Endothelial cell of umbilical vein (primary cell): ENCODE measurements at regions of chr3 and their contacts with region 1.

Region 1: DNA sequence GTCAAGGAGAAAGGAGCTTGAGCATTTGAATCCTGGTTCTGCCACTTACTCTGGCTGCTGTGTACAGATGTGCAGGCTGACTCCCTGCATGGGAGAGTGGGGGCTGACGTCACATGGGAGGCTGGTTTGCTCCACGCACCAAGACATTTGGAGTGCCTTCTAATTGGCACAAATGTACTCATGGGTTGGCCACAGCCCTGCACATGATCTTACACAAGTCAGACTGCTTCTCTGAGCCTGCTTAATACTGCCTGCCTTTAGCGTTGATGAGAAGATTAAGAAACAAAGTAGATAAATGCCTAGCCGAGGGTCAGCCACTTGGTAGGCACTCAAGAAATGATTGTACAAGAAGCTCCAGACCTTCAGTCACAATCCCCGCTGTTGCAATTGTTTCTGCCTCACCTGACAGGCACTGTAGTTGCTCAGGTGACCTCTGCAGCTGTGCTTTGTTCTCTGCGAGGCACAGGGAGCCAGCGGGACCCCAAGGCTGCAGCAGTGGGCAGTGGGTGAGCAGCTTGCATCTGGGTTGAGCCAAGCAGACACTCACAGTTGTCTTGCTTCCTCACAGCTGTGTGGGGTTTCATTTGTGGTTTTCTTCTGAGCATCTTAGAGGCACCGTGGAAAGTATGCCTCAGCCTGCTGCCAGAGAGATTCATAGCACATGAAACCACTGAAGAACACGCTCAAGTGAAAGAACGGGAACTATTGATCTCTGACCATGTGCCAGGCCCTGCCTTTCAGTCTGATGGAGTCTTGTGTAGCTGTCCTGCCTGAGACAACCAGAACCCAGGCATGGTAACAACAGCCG is 33.1 kb downstream of the GRK7 start:
- DNase-seq: peak; percentile 6
- H3K4me3 ChIP-seq: no peak overlapping the region
- H3K27ac ChIP-seq: no peak overlapping the region
- H3K4me1 ChIP-seq: peaks cover 16% of the 10 kb centered on the region
- H3K27me3 ChIP-seq: no peaks in the 10 kb centered on the region
- CTCF ChIP-seq: no peak
- POLR2A ChIP-seq: no peak

Region 2: DNA sequence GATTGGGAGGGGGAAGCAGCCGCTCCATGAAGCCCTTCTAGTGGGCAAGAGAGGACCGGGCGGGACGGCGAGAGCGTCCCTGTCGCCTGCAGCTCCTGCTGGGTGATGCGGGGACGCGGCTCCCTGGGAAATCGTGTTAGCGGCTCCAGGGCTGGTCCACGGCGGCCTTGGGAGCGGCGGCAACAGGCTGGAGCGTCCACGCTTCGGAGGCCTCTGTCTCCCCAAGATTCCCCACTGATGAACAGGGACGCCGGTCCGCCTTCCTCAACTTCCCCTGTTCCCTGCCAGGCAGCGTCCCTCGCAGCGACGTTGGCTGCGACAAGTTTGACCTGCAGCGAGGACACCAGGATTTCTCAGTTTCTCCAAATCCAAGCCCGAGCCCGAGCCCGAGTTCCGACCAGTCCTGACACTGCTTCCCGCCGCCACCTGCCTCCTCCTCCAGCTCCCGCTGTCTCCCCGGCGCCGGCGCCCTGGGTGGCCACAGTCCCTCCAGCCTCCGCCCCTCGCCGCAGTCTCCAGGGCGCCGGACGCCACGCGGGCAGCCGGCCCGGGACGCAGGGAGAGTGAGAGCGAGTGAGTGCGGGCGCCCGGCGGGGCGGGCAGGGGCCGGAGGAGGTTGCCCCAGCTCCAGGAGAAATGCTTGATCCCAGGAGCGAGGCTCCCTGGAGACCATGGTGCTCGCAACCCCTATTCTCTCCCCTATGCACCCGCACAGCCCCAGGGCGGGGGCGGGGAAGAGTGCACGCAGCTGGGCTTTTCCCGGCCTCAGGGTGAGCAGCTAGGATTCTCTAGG is 136.3 kb before region 1 on chr3:
- CTCF ChIA-PET with region 1: no interaction called
- POLR2A ChIA-PET with region 1: no interaction called
- dilution Hi-C with region 1: no loop called
- intact Hi-C with region 1: no loop called
- DNase-seq: peak; percentile 31
- H3K4me3 ChIP-seq: peak overlapping the region; percentile 1 to 35 (median 7)
- H3K27ac ChIP-seq: no peak overlapping the region
- H3K4me1 ChIP-seq: no peaks in the 10 kb centered on the region
- H3K27me3 ChIP-seq: peaks cover 40 to 50% of the 10 kb centered on the region in 2 experiments
- CTCF ChIP-seq: no peak
- POLR2A ChIP-seq: no peak

Region 3: DNA sequence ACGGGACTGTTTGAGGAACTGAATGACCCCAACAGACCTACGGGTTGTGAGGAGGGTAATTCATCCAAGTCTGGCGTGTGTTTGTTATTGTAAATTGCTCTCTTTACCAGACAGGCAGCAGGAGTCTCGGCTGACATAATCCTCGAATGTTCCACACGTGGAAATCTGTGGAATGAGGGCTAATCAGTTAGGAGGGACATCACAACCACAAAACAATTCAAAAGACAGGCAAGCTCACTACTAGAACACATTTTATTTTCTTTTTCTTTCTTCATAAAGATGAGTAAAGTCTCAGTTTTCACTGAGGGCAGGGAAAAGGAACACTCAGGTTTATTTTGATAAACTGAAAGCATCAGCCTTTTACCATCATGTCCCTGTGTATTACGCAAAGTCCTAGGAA is 20.7 kb after region 1 on chr3:
- CTCF ChIA-PET with region 1: no interaction called
- POLR2A ChIA-PET with region 1: no interaction called
- dilution Hi-C with region 1: no loop called
- intact Hi-C with region 1: no loop called
- DNase-seq: no peak
- H3K4me3 ChIP-seq: no peak overlapping the region
- H3K27ac ChIP-seq: no peak overlapping the region
- H3K4me1 ChIP-seq: no peaks in the 10 kb centered on the region
- H3K27me3 ChIP-seq: peaks cover 16 to 27% of the 10 kb centered on the region in 2 experiments
- CTCF ChIP-seq: no peak
- POLR2A ChIP-seq: no peak

Region 4: DNA sequence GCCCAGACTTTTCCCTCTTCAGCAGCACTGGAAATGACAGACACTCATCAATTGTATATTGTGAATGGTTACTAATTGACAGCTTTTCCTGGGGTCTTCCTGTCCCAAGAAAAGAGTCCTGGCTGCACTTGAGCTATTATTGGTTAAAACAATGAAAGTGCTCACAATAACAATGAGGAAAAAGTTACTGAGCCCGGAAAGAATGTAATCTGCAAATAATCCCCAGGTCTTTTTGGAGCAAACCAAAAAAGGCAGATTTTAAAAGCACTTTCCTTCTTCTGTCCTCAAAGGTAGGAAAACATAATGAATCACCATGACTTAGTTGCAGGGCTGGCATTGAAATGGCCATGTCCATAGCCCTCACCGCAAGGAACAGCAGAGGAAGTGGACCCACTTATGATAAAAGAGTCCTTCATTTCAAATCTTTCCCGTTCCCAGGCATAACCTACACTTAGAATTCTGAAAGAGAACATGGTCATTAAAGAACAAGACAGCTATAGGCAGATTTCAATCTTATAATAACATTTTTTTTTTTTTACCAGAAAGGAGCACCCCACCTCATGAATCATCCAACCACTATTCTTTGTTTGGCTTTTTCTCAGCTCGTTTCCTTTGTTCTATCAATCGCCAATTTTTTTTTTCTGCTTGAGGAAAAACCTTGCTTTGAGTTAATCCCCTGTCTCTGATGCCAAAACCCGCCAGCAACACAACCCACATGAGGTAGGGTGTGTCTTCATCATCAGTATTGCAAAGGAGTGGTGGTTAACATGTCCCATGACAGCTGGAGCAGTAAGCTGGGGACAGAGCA is 44.7 kb after region 1 on chr3:
- CTCF ChIA-PET with region 1: interaction called, 8 read pairs
- POLR2A ChIA-PET with region 1: interaction called, 4 read pairs
- dilution Hi-C with region 1: no loop called
- intact Hi-C with region 1: loop called (anchors 2 kb)
- DNase-seq: peak; percentile 84
- H3K4me3 ChIP-seq: peak overlapping the region in 1 of 3 experiments; percentile 9
- H3K27ac ChIP-seq: peak overlapping the region; percentile 80
- H3K4me1 ChIP-seq: peaks cover 21% of the 10 kb centered on the region
- H3K27me3 ChIP-seq: no peaks in the 10 kb centered on the region
- CTCF ChIP-seq: no peak
- POLR2A ChIP-seq: no peak

Region 5: GRCh38 chr3:141851411-141851810 is 55.1 kb after region 1 on chr3:
- CTCF ChIA-PET with region 1: no interaction called
- POLR2A ChIA-PET with region 1: no interaction called
- dilution Hi-C with region 1: no loop called
- intact Hi-C with region 1: loop called (anchors 2 kb)
- DNase-seq: peak; percentile 87
- H3K4me3 ChIP-seq: no peak overlapping the region
- H3K27ac ChIP-seq: no peak overlapping the region
- H3K4me1 ChIP-seq: peaks cover 9% of the 10 kb centered on the region
- H3K27me3 ChIP-seq: no peaks in the 10 kb centered on the region
- CTCF ChIP-seq: no peak
- POLR2A ChIP-seq: no peak

Region 6: DNA sequence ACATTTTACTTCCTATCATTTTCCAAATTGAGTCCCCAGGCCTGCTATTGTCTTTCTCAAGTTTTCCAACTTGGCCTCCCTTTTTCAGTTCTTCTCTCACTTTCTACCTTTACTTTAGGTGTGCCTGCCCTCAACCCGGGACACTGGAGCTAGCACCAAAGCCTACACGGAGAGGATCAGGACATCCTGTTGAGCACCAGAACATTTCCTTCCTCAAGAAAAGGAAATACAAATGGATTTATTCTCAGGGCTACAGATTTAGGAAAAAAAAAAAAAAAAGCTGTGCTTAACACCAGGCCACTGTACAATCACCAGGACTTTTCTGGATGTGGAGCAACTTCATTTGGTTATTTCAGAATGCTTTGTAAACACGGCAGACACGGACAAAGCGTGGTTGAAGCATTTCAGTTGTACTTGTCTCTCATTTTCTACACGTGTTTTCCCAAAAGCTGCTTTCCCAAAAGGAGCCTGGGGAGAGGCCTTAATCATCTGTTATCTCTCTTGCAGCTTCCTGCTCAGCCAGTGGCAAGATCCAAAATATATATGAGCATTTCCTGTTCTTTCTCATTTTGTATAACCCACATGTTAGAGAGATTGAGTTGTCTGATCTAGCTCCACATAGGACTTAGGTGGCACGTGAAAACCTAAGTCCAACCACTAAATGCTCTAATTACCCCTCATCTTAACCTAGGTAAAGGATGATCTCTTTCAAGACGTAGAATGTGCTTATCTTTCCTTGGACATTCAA is 64.7 kb after region 1 on chr3:
- CTCF ChIA-PET with region 1: no interaction called
- POLR2A ChIA-PET with region 1: interaction called, 11 read pairs
- dilution Hi-C with region 1: no loop called
- intact Hi-C with region 1: no loop called
- DNase-seq: peak; percentile 74
- H3K4me3 ChIP-seq: no peak overlapping the region
- H3K27ac ChIP-seq: peak overlapping the region; percentile 31
- H3K4me1 ChIP-seq: peaks cover 19% of the 10 kb centered on the region
- H3K27me3 ChIP-seq: no peaks in the 10 kb centered on the region
- CTCF ChIP-seq: no peak
- POLR2A ChIP-seq: no peak

Region 7: DNA sequence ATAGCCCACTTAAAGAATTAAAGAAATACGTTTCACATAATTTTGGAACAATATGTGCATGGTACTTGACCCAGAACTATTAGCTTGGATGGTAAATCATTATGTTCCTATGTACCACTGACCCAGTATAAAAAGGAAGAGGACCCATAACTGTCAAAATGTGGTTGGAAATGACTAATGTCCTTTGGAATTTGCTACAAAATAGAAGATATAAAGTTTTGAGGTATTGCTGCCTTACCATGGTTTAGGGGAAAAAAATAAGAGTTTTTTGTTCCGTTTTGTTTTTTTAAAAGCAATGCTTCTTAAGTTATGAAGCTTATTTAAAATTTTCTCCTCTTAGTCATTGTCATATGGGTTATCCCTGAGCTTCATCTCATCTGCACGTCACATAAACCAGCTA is 368.9 kb after region 1 on chr3:
- CTCF ChIA-PET with region 1: no interaction called
- POLR2A ChIA-PET with region 1: no interaction called
- dilution Hi-C with region 1: no loop called
- intact Hi-C with region 1: no loop called
- DNase-seq: no peak
- H3K4me3 ChIP-seq: no peak overlapping the region
- H3K27ac ChIP-seq: no peak overlapping the region
- H3K4me1 ChIP-seq: peaks cover 5% of the 10 kb centered on the region
- H3K27me3 ChIP-seq: no peaks in the 10 kb centered on the region
- CTCF ChIP-seq: no peak
- POLR2A ChIP-seq: no peak